Heart left ventricle (tissue), 16 donors: ENCODE measurements at regions of chrX and their contacts with region 1.

Region 1: GRCh38 chrX:39484159-39485068 is 613.3 kb downstream of the BCOR start:
- DNase-seq: no peak
- ATAC-seq: no peak
- H3K4me3 ChIP-seq: no peak overlapping the region
- H3K27ac ChIP-seq: no peak overlapping the region
- H3K4me1 ChIP-seq: no peaks in the 10 kb centered on the region
- H3K27me3 ChIP-seq: peaks cover 0 to 27% (median 0%) of the 10 kb centered on the region in 9 donors
- CTCF ChIP-seq: no peak
- POLR2A ChIP-seq: no peak

Region 2: GRCh38 chrX:39261446-39262147 is 222.8 kb before region 1 on chrX:
- intact Hi-C with region 1: no loop called
- DNase-seq: peak in 1 of 5 donors; percentile 7
- ATAC-seq: peak in 1 of 4 donors; percentile 48
- H3K4me3 ChIP-seq: no peak overlapping the region
- H3K27ac ChIP-seq: no peak overlapping the region
- H3K4me1 ChIP-seq: peaks cover 0 to 4% (median 0%) of the 10 kb centered on the region in 12 donors
- H3K27me3 ChIP-seq: peaks cover 0 to 15% (median 0%) of the 10 kb centered on the region in 9 donors
- CTCF ChIP-seq: peak; percentile 31 to 63 (median 49)
- POLR2A ChIP-seq: no peak

Region 3: DNA sequence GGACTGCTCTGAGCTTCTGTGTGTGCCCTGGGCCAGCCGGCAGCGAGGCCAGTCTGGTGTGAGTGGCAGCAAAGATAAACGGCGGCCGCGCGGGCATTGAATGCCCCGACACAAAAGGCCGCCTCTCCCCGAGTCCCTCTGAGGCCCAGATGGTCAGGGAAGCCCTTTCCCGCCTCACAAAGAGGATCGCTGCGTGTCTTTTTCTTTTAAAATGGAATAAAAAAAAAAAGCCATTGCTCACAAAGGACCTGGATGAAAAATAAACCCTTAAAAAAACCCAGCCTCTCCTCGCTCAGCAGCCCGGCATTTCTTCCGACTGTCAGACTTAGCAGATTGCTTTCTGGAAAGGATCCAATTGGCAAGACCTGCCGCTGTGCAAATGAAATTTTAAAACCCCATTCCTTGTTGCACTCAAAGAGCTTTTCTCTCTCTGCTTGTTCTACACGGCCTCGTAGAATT is 34.6 kb after region 1 on chrX:
- intact Hi-C with region 1: loop called in 3 of 10 experiments (anchors 5 kb)
- DNase-seq: peak in 4 of 5 donors; percentile 29 to 49 (median 39)
- ATAC-seq: peak; percentile 10 to 63 (median 36)
- H3K4me3 ChIP-seq: peak overlapping the region in 7 of 12 donors; percentile 5 to 42 (median 32)
- H3K27ac ChIP-seq: peak overlapping the region; percentile 40 to 90 (median 70)
- H3K4me1 ChIP-seq: peaks cover 0 to 14% (median 2%) of the 10 kb centered on the region in 12 donors
- H3K27me3 ChIP-seq: peaks cover 0 to 19% (median 0%) of the 10 kb centered on the region in 9 donors
- CTCF ChIP-seq: no peak
- POLR2A ChIP-seq: no peak